ENCODE measurements at regions of chr5 and their contacts with region 1.

Region 1: DNA sequence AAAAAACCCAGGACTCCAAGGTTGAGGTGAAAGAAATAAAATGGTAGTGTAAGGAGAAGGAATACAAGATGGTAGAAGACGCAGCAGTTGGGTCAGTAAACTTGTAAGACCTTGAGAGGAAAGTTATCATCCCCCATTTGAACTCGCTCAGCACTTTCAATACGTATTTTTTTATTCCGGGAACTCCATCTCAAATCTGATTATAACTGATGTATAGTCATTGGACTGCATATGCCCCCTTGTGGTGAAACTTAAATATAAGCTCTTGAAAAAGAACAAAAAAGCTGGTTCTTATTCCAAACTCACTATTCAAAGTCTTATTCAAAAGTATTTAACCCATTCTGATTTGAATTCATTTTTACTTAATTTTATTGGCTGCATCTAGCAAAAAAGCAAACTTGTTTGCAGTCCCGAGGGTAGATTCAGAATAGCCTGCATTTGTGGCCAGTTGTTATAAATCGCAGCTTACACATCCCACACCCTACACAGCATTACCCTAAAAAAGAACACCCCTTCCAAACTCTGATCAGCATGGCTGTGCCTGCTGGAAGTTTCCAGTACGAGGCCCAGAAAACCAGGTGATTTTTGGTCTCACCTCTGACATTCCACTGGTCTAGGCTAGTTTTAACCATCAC is 118.0 kb downstream of the ESM1 start:
- DNase-seq: peak; percentile 43 to 53 (median 49)
- ATAC-seq: peak; percentile 48; the same call in 2 of the 3 replicates
- H3K4me3 ChIP-seq: no peak overlapping the region
- H3K27ac ChIP-seq: no peak overlapping the region
- H3K4me1 ChIP-seq: no peaks in the 10 kb centered on the region
- H3K27me3 ChIP-seq: peaks cover 4 to 11% of the 10 kb centered on the region in 2 experiments; a peak in 4 of 5 replicates
- CTCF ChIP-seq: peak; percentile 30 to 68 (median 49); a peak in 4 of 6 replicates
- EP300 ChIP-seq: no peak
- POLR2A ChIP-seq: no peak
- RAD21 ChIP-seq: peak; percentile 73 to 77

Region 2: DNA sequence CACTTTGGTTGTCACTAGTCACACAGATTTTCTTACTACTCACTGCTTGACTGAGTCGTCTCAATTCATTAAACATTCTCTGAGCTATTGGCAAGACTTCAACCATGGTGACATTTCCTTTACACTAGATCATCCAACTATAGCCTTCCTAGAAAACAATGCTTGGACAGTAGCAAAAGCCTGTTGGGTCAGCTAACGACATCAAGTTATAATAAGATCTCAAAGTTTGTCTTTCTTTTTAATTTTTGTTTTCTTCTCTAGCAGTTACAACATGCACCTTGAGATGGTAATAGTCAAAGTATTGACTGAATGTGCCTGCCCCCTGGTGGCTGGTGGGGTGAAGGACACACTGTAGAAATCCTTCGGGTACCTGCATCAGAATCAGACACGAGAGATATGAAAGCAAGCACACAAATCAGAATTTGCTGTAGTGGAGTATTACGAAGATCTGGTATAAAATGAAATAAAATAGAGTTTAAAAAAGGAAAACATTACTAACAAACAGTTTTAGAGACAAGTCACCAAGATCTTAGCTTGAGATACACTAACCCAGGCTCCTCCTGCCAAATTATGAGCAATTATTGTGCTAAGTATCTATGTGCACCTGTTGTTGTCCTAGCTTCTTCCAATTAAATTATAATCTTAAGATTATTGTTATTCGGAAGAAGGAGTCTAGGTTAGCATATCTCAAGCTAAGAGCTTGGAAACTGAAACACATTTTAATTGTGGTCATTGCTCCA is 638.2 kb before region 1 on chr5:
- CTCF ChIA-PET with region 1: no interaction called
- POLR2A ChIA-PET with region 1: no interaction called
- in situ Hi-C with region 1: loop called (anchors 25 kb)
- intact Hi-C with region 1: no loop called
- DNase-seq: peak; percentile 46 to 65 (median 52)
- ATAC-seq: peak; percentile 79
- H3K4me3 ChIP-seq: no peak overlapping the region
- H3K27ac ChIP-seq: no peak overlapping the region
- H3K4me1 ChIP-seq: peaks cover 5 to 28% of the 10 kb centered on the region in 2 experiments; a peak in 4 of 5 replicates
- H3K27me3 ChIP-seq: no peaks in the 10 kb centered on the region
- CTCF ChIP-seq: peak; percentile 62 to 71 (median 71)
- EP300 ChIP-seq: no peak
- POLR2A ChIP-seq: no peak
- RAD21 ChIP-seq: peak; percentile 46 to 49